Lower lobe of right lung (tissue), 2 donors: ENCODE measurements at regions of chr17 and their contacts with region 1.

Region 1: GRCh38 chr17:67386965-67387551 is 10.0 kb downstream of the PITPNC1 start:
- DNase-seq: peak; percentile 58
- ATAC-seq: peak in 1 of 2 donors; percentile 74
- H3K4me3 ChIP-seq: no peak overlapping the region
- H3K27ac ChIP-seq: no peak overlapping the region
- H3K4me1 ChIP-seq: peaks cover 16% of the 10 kb centered on the region
- H3K27me3 ChIP-seq: no peaks in the 10 kb centered on the region
- CTCF ChIP-seq: peak; percentile 72

Region 2: DNA sequence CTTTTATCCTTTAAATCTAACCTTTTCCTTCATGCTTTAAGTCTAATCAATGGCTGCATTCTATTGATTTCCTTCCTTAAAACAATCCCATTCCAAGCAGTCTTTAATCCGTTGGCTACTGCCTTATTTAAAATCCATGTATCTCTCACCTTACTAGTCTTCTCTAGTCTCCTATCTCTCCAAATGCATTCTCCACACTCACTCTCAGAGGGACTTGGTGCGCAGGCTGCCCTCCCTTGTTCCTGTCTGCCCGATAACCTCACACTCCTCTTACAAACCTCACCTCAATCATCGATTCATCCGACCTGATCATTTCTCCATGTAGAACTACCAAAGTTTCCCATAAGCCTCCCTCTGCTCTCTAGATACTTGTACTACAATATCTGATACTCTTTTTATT is 43.8 kb before region 1 on chr17:
- intact Hi-C with region 1: no loop called
- DNase-seq: no peak
- ATAC-seq: no peak
- H3K4me3 ChIP-seq: no peak overlapping the region
- H3K27ac ChIP-seq: no peak overlapping the region
- H3K4me1 ChIP-seq: no peaks in the 10 kb centered on the region
- H3K27me3 ChIP-seq: no peaks in the 10 kb centered on the region
- CTCF ChIP-seq: no peak

Region 3: DNA sequence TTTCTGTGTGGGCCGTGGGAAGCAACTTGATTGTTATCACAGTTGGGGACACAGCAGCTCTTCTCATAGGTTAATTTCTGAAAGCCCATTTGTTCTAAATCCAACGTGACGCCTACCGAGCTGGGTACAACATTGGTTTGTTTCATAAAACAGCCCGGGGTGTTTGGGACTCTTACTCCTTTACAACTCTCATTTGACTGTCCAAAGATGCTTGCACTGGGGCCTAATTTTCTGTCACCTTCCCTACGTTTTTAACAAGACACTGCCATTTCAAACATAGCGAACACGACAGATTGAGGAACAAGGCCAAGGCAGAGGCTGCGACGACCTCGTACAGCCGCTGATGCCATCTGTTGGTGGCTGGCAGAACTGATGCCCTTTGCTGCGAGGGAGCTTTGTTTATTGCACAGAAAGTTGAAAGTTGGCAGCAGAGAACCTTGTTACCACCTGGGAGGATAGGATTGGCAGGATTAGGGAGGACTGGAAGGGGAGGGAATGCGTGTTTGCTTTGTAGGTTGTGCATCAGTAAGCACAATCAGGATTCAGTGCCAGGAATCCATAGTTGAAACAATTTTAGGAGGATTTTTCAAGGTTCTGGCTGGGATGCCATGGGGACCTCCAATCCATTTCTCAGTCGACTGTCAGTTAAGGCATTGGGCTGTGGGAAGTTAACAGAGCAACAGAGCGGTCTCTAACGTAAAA is 88.3 kb after region 1 on chr17:
- intact Hi-C with region 1: loop called (anchors 10 kb)
- DNase-seq: peak; percentile 87
- ATAC-seq: peak; percentile 87 to 93
- H3K4me3 ChIP-seq: no peak overlapping the region
- H3K27ac ChIP-seq: peak overlapping the region; percentile 66
- H3K4me1 ChIP-seq: peaks cover 46% of the 10 kb centered on the region
- H3K27me3 ChIP-seq: no peaks in the 10 kb centered on the region
- CTCF ChIP-seq: peak; percentile 92

Region 4: DNA sequence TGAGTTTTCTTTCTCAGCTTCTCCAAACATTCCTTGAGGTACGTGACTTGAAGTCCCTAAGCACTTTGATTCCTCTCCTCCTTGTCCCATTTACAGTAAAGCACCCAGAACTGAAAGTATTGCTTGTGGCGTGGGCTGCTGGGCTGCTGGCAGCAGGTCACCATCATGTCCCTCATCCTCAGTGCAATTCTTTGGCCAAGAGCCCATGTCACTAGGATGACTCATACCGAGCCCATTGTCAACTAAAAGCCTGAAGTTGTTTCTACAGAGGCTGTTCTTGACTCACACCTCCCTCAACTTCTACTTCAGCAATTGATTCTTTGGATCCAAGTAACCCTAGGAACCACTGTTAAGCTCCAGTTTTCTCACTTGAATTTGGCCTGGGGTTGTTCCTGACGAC is 702.8 kb after region 1 on chr17:
- intact Hi-C with region 1: no loop called
- DNase-seq: peak; percentile 65
- ATAC-seq: peak; percentile 84 to 85
- H3K4me3 ChIP-seq: no peak overlapping the region
- H3K27ac ChIP-seq: no peak overlapping the region
- H3K4me1 ChIP-seq: peaks cover 18% of the 10 kb centered on the region
- H3K27me3 ChIP-seq: no peaks in the 10 kb centered on the region
- CTCF ChIP-seq: no peak